ENCODE measurements at regions of chr9 and their contacts with region 1.

Region 1: DNA sequence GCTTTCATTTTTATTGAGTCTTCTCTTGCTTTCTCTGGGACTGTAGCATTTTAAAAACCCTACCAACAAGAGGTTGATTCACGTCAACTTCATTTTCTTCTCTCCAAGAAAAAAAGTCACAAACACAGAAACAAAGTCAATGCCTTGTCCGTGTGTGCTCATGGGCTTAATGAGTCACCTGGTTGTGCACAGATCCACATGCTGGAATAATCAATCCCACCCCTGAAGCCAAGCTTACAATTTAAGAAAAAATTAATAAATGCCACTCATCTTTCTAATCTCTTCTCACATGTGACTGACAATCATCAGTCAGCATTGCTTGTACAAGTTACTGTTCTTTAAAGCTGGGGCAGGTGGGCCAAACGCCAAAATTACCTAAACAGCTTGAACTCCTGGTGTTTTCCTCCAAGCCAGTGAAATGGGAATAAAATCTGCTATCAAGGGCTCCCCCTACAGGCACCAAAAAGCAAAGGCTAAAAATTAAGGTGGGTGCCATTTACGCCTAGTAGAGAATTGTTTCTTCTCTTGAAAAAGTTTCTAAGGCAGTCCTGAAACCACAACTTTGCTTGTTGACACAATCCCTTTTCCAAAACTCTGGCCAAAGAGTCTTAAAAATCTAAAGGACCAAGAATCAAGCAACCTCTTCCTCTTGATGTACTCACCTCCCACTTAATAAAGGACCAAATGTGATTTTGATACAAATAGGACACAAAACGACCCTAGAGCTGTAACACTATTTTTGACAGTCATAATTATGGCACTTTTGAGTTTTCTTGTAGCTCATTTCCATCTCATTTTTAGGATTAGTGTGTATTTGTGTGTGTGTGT is 21.3 kb downstream of the TRMO start:
- DNase-seq: peak; percentile 85
- H3K27ac ChIP-seq: no peak overlapping the region; the same call in 1 of the 2 replicates
- CTCF ChIP-seq: peak; percentile 97

Region 2: GRCh38 chr9:97440160-97440559 is 460.8 kb before region 1 on chr9:
- CTCF ChIA-PET with region 1: no interaction called
- POLR2A ChIA-PET with region 1: no interaction called
- DNase-seq: no peak
- H3K27ac ChIP-seq: no peak overlapping the region
- CTCF ChIP-seq: no peak

Region 3: GRCh38 chr9:97705354-97705950 is 195.5 kb before region 1 on chr9:
- CTCF ChIA-PET with region 1: interaction called, 15 read pairs
- POLR2A ChIA-PET with region 1: no interaction called
- DNase-seq: no peak
- H3K27ac ChIP-seq: no peak overlapping the region
- CTCF ChIP-seq: no peak

Region 4: GRCh38 chr9:97749928-97750327 is 151.0 kb before region 1 on chr9:
- CTCF ChIA-PET with region 1: interaction called, 17 read pairs
- POLR2A ChIA-PET with region 1: no interaction called
- DNase-seq: no peak
- H3K27ac ChIP-seq: no peak overlapping the region
- CTCF ChIP-seq: peak; percentile 28

Region 5: GRCh38 chr9:97890038-97890437 is 10.9 kb before region 1 on chr9:
- CTCF ChIA-PET with region 1: interaction called, 21 read pairs
- POLR2A ChIA-PET with region 1: no interaction called
- DNase-seq: peak; percentile 47
- H3K27ac ChIP-seq: no peak overlapping the region
- CTCF ChIP-seq: peak; percentile 67

Region 6: GRCh38 chr9:98201102-98201501 is 300.1 kb after region 1 on chr9:
- CTCF ChIA-PET with region 1: no interaction called
- POLR2A ChIA-PET with region 1: no interaction called
- DNase-seq: no peak
- H3K27ac ChIP-seq: peak overlapping the region; percentile 52
- CTCF ChIP-seq: no peak